ENCODE measurements at regions of chr7 and their contacts with region 1.

Region 1: DNA sequence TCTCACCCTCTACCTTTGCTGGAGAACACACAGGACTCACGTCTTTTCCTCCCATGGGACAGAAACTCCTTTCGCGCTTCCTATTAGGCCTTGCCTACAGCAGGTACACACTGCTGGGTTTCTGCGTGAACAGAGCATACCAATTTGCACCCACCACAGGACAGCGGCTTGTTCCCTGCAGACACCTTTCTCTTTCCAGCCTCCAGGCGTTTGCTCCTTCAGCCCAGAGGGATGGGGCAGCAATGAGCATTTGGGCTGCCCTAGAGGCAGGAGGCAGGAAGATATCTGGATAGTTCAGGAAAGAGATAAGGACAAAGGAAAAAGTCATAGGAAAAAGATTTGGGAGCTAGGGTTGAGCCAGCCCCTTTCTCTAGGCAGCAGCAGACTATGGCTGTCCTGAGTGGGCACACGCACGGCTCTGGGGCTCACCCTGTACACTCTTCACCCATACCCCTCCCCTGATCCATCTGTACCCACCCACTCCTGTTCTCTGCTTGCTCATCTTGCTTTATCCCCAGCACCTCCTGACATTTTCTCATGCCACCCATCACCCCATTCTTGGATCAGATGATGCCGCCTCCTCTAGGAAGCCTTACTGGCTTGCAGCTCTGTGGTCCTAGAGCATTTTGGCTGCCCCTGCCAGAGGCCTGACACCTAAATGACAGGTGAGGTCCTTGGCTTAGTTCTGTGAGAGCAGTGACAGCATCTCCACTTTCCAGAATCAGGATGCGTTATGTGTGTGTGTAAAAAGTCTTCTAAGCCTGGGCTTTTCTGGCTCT is 40.7 kb upstream of the SPDYE3 start:
- DNase-seq: peak in 28 of 42 donors; percentile 9 to 75 (median 33)

Region 2: DNA sequence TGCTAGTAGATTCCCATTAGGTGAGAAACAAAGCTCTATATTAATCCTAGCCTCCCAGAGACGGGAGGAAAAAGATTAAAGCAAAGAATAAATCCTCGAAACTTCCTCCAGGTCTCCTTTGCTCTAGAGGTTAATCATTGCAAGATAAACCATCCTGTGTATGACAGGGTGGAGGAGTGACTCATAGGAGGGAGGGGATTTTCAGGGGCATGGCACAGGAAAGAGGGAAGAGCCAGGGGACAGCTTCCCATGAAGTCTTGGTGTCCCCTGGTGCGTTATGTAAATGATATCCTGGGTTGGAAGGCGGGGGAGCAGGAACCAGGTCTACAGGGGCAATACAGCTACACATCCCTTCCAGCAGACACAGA is 587.7 kb before region 1 on chr7:
- intact Hi-C with region 1: no loop called
- DNase-seq: no peak

Region 3: GRCh38 chr7:100171087-100171681 is 95.6 kb before region 1 on chr7:
- intact Hi-C with region 1: no loop called
- DNase-seq: no peak

Region 4: GRCh38 chr7:100215895-100216294 is 50.9 kb before region 1 on chr7:
- intact Hi-C with region 1: loop called (anchors 5 kb)
- DNase-seq: peak in 12 of 42 donors; percentile 19 to 62 (median 36)